ENCODE measurements at regions of chr1 and their contacts with region 1.

Region 1: GRCh38 chr1:16440470-16441281 is at the start of gene NECAP2:
- DNase-seq: peak; percentile 89
- H3K4me3 Mint-ChIP-seq: peak within 1 kb of the TSS; percentile 95
- H3K27ac Mint-ChIP-seq: peak within 1 kb of the TSS; percentile 93
- H3K4me1 Mint-ChIP-seq: peaks cover 33% of the 10 kb centered on the region
- H3K27me3 Mint-ChIP-seq: no peaks in the 10 kb centered on the region
- total RNA-seq, gene NECAP2: 79.9 and 81.9 TPM in 2 replicates

Region 2: DNA sequence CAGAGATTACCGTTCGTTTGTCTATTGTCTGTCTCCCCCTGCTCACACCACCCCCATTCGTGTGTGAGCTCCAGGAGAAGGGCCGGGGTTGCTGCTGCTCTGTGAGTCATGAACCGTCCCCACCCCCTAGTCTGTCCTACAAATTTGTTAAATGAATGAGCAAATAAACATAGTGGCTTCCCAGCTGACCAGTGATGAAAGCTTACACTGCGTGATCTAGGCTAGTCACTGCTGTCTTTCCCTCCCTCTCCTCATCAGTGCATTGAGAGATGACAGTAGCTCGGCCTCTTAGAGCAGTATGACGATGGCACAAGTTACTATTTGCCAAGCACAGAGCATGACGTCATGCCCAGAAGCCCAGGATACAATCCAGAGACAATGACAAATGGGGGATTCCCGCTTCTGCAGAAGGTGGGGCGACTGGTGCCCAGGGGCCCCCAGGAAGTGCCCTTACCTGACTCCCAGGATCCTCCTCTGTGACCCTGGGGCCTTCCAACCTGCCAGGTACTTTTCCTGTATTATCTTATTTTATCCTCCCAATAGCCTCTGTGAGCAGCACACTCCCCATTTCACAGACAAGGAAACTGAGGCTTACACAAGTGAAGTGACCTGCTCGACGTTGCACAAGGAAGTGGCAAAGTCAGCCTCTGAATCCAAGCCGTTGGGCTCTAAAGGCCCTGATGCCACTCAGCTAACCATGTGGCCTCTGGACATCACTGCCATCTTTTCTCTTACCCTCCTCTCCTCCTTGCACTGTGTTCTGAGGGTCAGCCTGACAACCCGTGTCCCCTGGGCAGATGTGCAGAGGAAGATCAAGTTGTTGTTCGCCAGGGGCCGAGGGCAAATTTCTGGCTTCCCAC is 276.2 kb before region 1 on chr1:
- intact Hi-C with region 1: no loop called
- DNase-seq: no peak
- H3K4me3 Mint-ChIP-seq: no peak overlapping the region
- H3K27ac Mint-ChIP-seq: no peak overlapping the region
- H3K4me1 Mint-ChIP-seq: peaks cover 40% of the 10 kb centered on the region
- H3K27me3 Mint-ChIP-seq: peaks cover 45% of the 10 kb centered on the region

Region 3: DNA sequence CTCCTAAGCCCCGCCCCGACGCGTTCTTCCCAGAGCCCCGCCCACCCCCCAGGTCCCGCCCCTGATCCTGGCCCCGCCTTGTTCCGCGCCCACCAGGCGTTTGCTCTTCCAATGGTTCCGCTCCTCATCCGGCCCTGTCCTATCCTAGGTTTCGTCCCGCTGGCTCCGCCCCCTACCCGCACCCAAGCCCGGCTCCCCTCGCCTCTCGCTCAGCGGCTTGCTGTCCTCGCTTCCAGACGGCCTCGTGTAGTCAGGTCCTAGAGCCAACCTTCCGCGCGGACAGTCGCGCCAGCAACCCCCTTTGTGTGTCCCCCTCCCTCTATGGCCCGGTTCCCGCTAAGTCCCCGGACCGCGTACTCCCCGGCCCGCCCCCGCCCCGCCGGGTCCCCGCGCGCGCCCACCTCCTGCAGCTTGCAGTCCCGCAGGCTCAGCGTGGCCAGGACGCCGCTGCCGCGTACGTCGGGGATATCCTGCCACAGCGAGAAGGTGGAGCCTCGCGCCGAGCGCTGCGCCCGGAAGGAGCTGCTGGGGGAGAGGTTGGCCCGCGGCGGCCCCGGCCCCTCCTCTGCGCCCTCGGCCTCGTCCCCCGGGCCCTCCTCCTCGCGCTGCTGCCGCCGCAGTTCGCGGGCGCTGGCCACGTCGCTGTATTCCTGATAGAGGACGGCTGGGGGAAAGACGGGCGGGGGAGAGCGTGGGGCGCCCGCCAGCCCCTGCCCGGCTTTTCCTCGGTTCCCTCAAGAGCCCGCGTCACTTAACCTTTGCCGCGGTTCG is 233.9 kb before region 1 on chr1:
- intact Hi-C with region 1: loop called (anchors 1 kb)
- DNase-seq: peak; percentile 92
- H3K4me3 Mint-ChIP-seq: peak overlapping the region; percentile 83
- H3K27ac Mint-ChIP-seq: peak overlapping the region; percentile 97
- H3K4me1 Mint-ChIP-seq: no peaks in the 10 kb centered on the region
- H3K27me3 Mint-ChIP-seq: no peaks in the 10 kb centered on the region

Region 4: GRCh38 chr1:16243936-16244649 is 196.6 kb before region 1 on chr1:
- intact Hi-C with region 1: loop called (anchors 2 kb)
- DNase-seq: peak; percentile 64
- H3K4me3 Mint-ChIP-seq: no peak overlapping the region
- H3K27ac Mint-ChIP-seq: no peak overlapping the region
- H3K4me1 Mint-ChIP-seq: peaks cover 10% of the 10 kb centered on the region
- H3K27me3 Mint-ChIP-seq: no peaks in the 10 kb centered on the region

Region 5: DNA sequence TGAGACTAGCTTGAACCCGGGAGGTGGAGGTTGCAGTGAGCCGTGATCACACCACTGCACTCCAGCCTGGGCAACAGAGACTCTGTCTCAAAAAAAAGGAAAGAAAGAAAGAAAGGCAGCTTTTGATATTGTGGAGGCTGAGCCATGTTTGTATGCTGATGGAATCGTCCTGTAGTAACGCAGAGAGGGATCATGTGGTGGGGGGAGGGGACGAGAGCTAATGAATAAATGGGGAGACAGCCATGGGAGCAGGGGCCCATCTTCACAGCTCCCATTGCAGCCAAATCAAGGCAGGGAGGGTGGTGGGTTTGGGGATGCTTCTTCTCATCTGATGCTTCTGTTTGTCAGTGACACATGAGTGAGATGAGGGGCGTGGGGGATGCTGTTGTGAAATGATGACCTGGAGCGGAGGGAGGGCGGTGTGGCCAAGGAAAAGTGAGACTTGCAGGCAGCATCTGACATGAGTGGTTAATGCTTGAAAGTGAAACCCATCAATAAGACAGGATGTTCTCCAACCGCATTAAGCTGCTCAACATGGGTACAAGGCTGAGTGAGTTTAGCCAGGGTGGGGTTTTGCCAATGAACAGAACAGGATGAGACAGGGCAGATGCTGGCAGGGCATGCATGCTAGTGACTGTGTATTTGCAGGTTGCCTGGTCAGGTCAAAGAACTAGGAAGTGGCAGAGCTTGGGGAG is 20.1 kb before region 1 on chr1:
- intact Hi-C with region 1: loop called (anchors 1 kb)
- DNase-seq: peak; percentile 54
- H3K4me3 Mint-ChIP-seq: peak overlapping the region; percentile 60
- H3K27ac Mint-ChIP-seq: peak overlapping the region; percentile 80
- H3K4me1 Mint-ChIP-seq: peaks cover 26% of the 10 kb centered on the region
- H3K27me3 Mint-ChIP-seq: peaks cover 4% of the 10 kb centered on the region

Region 6: GRCh38 chr1:16613185-16614147 is 172.8 kb after region 1 on chr1 and contains the start of gene NBPF1:
- intact Hi-C with region 1: loop called (anchors 2 kb)
- DNase-seq: peak; percentile 87
- H3K4me3 Mint-ChIP-seq: no peak within 1 kb of the TSS
- H3K27ac Mint-ChIP-seq: no peak within 1 kb of the TSS
- H3K4me1 Mint-ChIP-seq: no peaks in the 10 kb centered on the region
- H3K27me3 Mint-ChIP-seq: no peaks in the 10 kb centered on the region
- total RNA-seq, gene NBPF1: 4.4 and 6.1 TPM in 2 replicates